Activated CD4-positive, alpha-beta T cell treated with anti-CD3 and anti-CD28 coated beads for 36 hours (primary cell): ENCODE measurements at regions of chr17 and their contacts with region 1.

Region 1: GRCh38 chr17:81222906-81223761 is at the start of gene CEP131:
- DNase-seq: peak; percentile 100
- ATAC-seq: peak; percentile 98
- H3K4me3 Mint-ChIP-seq: peak within 1 kb of the TSS; percentile 50
- H3K27ac Mint-ChIP-seq: peak within 1 kb of the TSS; percentile 76
- H3K4me1 Mint-ChIP-seq: peaks cover 19% of the 10 kb centered on the region
- H3K27me3 Mint-ChIP-seq: no peaks in the 10 kb centered on the region
- total RNA-seq, gene CEP131: 7.6 to 9.5 TPM

Region 2: GRCh38 chr17:80035943-80036714 is 1187.0 kb before region 1 on chr17 and contains the start of gene CCDC40:
- CTCF ChIA-PET with region 1: no interaction called
- POLR2A ChIA-PET with region 1: no interaction called
- intact Hi-C with region 1: loop called in 1 of 2 experiments (anchors 1 kb)
- DNase-seq: peak; percentile 82
- ATAC-seq: peak; percentile 72
- H3K4me3 Mint-ChIP-seq: peak within 1 kb of the TSS; percentile 82
- H3K27ac Mint-ChIP-seq: no peak within 1 kb of the TSS
- H3K4me1 Mint-ChIP-seq: peaks cover 7% of the 10 kb centered on the region
- H3K27me3 Mint-ChIP-seq: peaks cover 12% of the 10 kb centered on the region
- total RNA-seq, gene CCDC40: 0.56 to 0.57 TPM

Region 3: GRCh38 chr17:80991645-80992076 is 231.5 kb before region 1 on chr17 and contains the start of gene CHMP6:
- CTCF ChIA-PET with region 1: no interaction called
- POLR2A ChIA-PET with region 1: no interaction called
- intact Hi-C with region 1: loop called in 1 of 2 experiments (anchors 1 kb)
- DNase-seq: peak; percentile 83
- ATAC-seq: peak; percentile 49
- H3K4me3 Mint-ChIP-seq: peak within 1 kb of the TSS; percentile 69
- H3K27ac Mint-ChIP-seq: peak within 1 kb of the TSS; percentile 74
- H3K4me1 Mint-ChIP-seq: peaks cover 21% of the 10 kb centered on the region
- H3K27me3 Mint-ChIP-seq: peaks cover 3% of the 10 kb centered on the region
- total RNA-seq, gene CHMP6: 15.9 to 19.4 TPM

Region 4: DNA sequence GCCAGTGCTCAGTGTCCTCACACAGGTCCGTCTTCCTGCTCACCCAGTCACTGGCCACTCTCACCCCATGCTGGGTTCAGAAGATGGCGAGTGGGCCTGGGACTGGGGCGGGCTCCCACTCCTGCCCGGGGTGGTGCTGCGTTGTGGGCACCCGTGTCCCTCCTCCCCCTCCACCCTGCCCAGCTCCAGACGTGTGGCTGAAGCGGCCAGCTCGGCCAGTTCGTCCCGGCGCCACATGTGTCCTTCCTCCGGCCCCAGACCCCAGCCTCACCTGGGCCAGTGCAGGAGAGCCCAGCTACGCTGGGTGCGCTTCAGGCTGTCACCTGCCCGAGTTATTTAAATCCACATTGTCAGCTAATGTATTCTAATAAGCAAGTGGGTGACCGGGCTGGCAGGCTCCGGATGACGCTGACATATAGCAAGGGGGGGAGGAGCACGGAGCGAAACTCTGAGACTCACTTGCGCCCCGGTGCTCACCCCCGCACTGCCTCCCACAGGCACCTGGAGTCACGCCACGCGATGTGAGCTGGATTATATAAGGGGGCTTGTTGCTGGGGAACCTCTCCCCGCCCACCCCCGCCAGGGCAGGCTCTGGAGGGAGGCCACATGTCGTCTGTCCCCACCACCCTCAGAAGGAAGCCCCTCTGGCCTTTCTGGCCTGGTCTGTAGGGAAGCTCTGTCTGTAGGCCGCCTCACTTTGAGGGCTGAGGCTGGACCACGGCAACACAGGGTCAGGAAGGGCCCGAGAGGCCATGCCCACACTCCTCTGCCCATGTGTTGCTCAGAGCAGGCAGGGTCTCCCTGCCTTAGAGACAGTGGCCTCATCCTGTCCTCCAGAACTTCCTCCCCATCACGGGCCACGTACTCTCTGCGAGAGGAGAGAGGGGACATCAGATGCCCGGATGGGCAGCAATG is 195.3 kb before region 1 on chr17:
- CTCF ChIA-PET with region 1: no interaction called
- POLR2A ChIA-PET with region 1: no interaction called
- intact Hi-C with region 1: no loop called
- DNase-seq: no peak
- ATAC-seq: no peak
- H3K4me3 Mint-ChIP-seq: no peak overlapping the region
- H3K27ac Mint-ChIP-seq: no peak overlapping the region
- H3K4me1 Mint-ChIP-seq: peaks cover 5% of the 10 kb centered on the region
- H3K27me3 Mint-ChIP-seq: peaks cover 11% of the 10 kb centered on the region

Region 5: GRCh38 chr17:81119223-81120148 is 103.6 kb before region 1 on chr17:
- CTCF ChIA-PET with region 1: no interaction called
- POLR2A ChIA-PET with region 1: no interaction called
- intact Hi-C with region 1: loop called in 1 of 2 experiments (anchors 1 kb)
- DNase-seq: peak; percentile 95
- ATAC-seq: peak; percentile 82
- H3K4me3 Mint-ChIP-seq: peak overlapping the region; percentile 37
- H3K27ac Mint-ChIP-seq: no peak overlapping the region
- H3K4me1 Mint-ChIP-seq: no peaks in the 10 kb centered on the region
- H3K27me3 Mint-ChIP-seq: no peaks in the 10 kb centered on the region

Region 6: GRCh38 chr17:81294856-81295680 is 71.9 kb after region 1 on chr17 and contains the start of gene SLC38A10:
- CTCF ChIA-PET with region 1: interaction called, 4 read pairs
- POLR2A ChIA-PET with region 1: no interaction called
- intact Hi-C with region 1: loop called in 1 of 2 experiments (anchors 1 kb)
- DNase-seq: peak; percentile 95
- ATAC-seq: peak; percentile 91
- H3K4me3 Mint-ChIP-seq: peak within 1 kb of the TSS; percentile 89
- H3K27ac Mint-ChIP-seq: peak within 1 kb of the TSS; percentile 96
- H3K4me1 Mint-ChIP-seq: peaks cover 36% of the 10 kb centered on the region
- H3K27me3 Mint-ChIP-seq: no peaks in the 10 kb centered on the region
- total RNA-seq, gene SLC38A10: 47.6 to 52.9 TPM

Region 7: GRCh38 chr17:81512560-81513371 is 289.6 kb after region 1 on chr17 and contains the start of gene ACTG1:
- CTCF ChIA-PET with region 1: no interaction called
- POLR2A ChIA-PET with region 1: interaction called, 5 read pairs
- intact Hi-C with region 1: loop called in 1 of 2 experiments (anchors 1 kb)
- DNase-seq: peak; percentile 95
- ATAC-seq: peak; percentile 61
- H3K4me3 Mint-ChIP-seq: peak within 1 kb of the TSS; percentile 97
- H3K27ac Mint-ChIP-seq: peak within 1 kb of the TSS; percentile 89
- H3K4me1 Mint-ChIP-seq: peaks cover 21% of the 10 kb centered on the region
- H3K27me3 Mint-ChIP-seq: no peaks in the 10 kb centered on the region
- total RNA-seq, gene ACTG1: 4,119 to 5,987 TPM

Region 8: GRCh38 chr17:81666342-81667191 is 443.4 kb after region 1 on chr17 and contains the starts of genes CCDC137 and OXLD1:
- CTCF ChIA-PET with region 1: no interaction called
- POLR2A ChIA-PET with region 1: no interaction called
- intact Hi-C with region 1: loop called in 1 of 2 experiments (anchors 2 kb)
- DNase-seq: peak; percentile 97
- ATAC-seq: peak; percentile 91
- H3K4me3 Mint-ChIP-seq: peak within 1 kb of the TSS; percentile 91
- H3K27ac Mint-ChIP-seq: peak within 1 kb of the TSS; percentile 97
- H3K4me1 Mint-ChIP-seq: peaks cover 53% of the 10 kb centered on the region
- H3K27me3 Mint-ChIP-seq: no peaks in the 10 kb centered on the region
- total RNA-seq, gene CCDC137: 30.0 to 36.6 TPM
- total RNA-seq, gene OXLD1: 29.4 to 45.3 TPM